Activated CD8-positive, alpha-beta T cell treated with anti-CD3 and anti-CD28 coated beads for 36 hours (primary cell): ENCODE measurements at regions of chr20 and their contacts with region 1.

Region 1: DNA sequence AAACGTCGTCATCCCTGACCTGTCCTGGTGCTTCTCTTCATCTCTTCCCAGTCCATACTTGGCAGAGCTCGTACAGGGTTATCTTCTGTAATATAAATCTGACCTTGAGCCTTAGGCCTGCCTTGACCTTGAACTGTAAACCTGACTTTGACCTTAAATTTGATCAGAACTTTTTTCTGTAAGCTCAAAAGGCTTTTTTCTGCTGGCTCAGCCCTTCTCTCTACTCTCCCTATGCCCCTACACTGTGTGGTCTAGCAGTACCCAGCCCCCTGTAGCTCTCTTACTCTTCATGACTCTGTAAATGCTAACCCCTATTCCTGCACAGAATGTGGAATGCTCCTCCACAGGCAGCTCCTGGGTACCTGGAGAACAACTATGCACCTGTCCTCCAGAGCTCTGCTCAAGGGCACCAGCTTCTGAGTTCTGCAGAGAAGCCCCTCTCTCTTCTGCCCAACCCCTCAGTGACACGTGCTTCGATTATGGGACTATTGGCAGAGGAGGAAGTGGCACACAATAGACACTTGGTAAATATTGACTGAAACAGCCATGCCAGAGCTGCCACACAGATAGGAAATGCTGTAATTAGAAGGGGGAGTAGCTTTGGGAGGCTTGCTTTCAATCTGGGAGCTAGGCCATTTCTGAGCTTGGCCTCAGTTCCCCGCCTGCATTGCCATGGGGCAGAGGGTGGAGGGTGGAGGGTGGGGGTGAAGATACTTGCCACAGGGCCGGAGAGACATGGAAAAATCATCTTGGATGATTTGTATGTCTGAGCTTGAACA is 15.4 kb downstream of the SNPH start:
- DNase-seq: no peak
- ATAC-seq: no peak
- H3K4me3 Mint-ChIP-seq: no peak overlapping the region
- H3K27ac Mint-ChIP-seq: peak overlapping the region; percentile 52
- H3K4me1 Mint-ChIP-seq: peaks cover 49% of the 10 kb centered on the region
- H3K27me3 Mint-ChIP-seq: no peaks in the 10 kb centered on the region
- CTCF ChIP-seq: no peak

Region 2: GRCh38 chr20:381581-382290 is 899.7 kb before region 1 on chr20:
- CTCF ChIA-PET with region 1: no interaction called
- POLR2A ChIA-PET with region 1: no interaction called
- intact Hi-C with region 1: no loop called
- DNase-seq: peak; percentile 89
- ATAC-seq: peak; percentile 70
- H3K4me3 Mint-ChIP-seq: peak overlapping the region; percentile 83
- H3K27ac Mint-ChIP-seq: peak overlapping the region; percentile 88
- H3K4me1 Mint-ChIP-seq: peaks cover 20% of the 10 kb centered on the region
- H3K27me3 Mint-ChIP-seq: no peaks in the 10 kb centered on the region
- CTCF ChIP-seq: no peak

Region 3: DNA sequence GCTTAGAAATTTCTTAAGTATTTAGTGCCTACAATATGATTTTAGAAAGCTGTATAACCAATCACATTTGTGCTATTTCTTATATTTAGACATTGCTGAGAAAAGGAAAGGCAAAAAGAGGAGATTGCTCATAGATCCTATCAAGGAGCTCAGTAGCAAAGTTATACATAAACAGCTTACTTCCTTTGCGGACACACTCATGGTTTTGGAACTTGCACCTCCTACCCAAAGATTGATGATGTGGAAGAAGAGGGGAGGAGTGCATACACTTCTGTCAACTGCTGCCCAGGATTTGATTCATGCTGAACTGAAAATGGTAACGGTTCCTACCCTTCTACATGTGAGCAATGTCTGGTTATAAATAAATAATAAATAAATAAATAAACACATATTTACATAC is 38.9 kb before region 1 on chr20:
- CTCF ChIA-PET with region 1: no interaction called
- POLR2A ChIA-PET with region 1: no interaction called
- intact Hi-C with region 1: no loop called
- DNase-seq: no peak
- ATAC-seq: peak; percentile 67
- H3K4me3 Mint-ChIP-seq: no peak overlapping the region
- H3K27ac Mint-ChIP-seq: no peak overlapping the region
- H3K4me1 Mint-ChIP-seq: peaks cover 7% of the 10 kb centered on the region
- H3K27me3 Mint-ChIP-seq: peaks cover 6% of the 10 kb centered on the region
- CTCF ChIP-seq: no peak

Region 4: GRCh38 chr20:1266167-1266973 is 15.1 kb before region 1 on chr20 and contains the start of gene SNPH:
- CTCF ChIA-PET with region 1: interaction called, 9 read pairs
- POLR2A ChIA-PET with region 1: interaction called, 15 read pairs
- intact Hi-C with region 1: no loop called
- DNase-seq: peak; percentile 86
- ATAC-seq: peak; percentile 89
- H3K4me3 Mint-ChIP-seq: peak within 1 kb of the TSS; percentile 79
- H3K27ac Mint-ChIP-seq: peak within 1 kb of the TSS; percentile 88
- H3K4me1 Mint-ChIP-seq: peaks cover 42% of the 10 kb centered on the region
- H3K27me3 Mint-ChIP-seq: no peaks in the 10 kb centered on the region
- CTCF ChIP-seq: no peak
- total RNA-seq, gene SNPH: 3.7 to 4.1 TPM

Region 5: GRCh38 chr20:1392823-1393506 is 111.5 kb after region 1 on chr20 and contains the start of gene FKBP1A:
- CTCF ChIA-PET with region 1: no interaction called
- POLR2A ChIA-PET with region 1: no interaction called
- intact Hi-C with region 1: no loop called
- DNase-seq: peak; percentile 92
- ATAC-seq: peak; percentile 88
- H3K4me3 Mint-ChIP-seq: peak within 1 kb of the TSS; percentile 82
- H3K27ac Mint-ChIP-seq: peak within 1 kb of the TSS; percentile 91
- H3K4me1 Mint-ChIP-seq: peaks cover 46% of the 10 kb centered on the region
- H3K27me3 Mint-ChIP-seq: no peaks in the 10 kb centered on the region
- CTCF ChIP-seq: no peak
- total RNA-seq, gene FKBP1A: 259 to 282 TPM